HCT116 (cell line): ENCODE measurements at regions of chr7 and their contacts with region 1.

Region 1: DNA sequence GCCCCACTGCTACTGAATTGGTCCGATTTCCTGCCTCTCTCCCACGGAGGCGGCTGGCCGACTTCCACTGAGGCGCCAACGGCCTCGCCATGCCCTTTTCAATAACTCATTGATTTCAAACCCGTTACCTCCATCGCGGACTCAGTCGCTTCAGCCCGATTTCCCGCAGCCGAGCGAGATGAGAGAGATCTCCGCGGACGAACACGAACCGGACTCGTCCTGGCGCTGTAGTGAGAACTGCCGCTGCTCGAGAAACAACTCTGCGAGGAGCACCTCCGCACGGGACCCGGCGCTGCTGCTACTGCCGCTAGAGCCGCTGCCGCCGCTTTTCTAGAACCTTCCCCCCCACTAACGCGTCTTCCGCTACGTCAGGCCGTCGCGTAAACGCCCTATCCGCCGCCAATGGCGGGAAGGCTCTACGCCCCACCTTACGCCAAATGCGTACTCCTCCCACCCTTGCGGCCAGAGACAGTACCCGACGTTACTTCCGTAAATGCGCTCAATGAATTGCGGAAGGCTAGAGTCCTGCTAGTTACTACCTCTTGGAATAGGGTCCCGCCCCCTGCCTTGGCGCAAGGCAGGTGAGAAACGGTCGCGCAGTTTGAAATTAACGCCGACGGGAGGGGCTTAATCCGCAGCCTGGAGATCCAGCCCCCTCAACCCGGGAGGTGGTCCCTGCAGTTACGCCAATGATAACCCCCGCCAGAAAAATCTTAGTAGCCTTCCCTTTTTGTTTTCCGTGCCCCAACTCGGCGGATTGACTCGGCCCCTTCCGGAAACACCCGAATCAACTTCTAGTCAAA is at the start of gene HNRNPA2B1:
- DNase-seq: peak; percentile 95
- ATAC-seq: peak; percentile 78
- H3K4me3 ChIP-seq: peak within 1 kb of the TSS; percentile 68 to 93
- H3K27ac ChIP-seq: peak within 1 kb of the TSS; percentile 97
- H3K4me1 ChIP-seq: peaks cover 13 to 39% of the 10 kb centered on the region in 2 experiments
- H3K27me3 ChIP-seq: no peaks in the 10 kb centered on the region
- CTCF ChIP-seq: no peak
- POLR2A ChIP-seq: peak; percentile 99
- RAD21 ChIP-seq: no peak
- total RNA-seq, gene HNRNPA2B1: 870 TPM

Region 2: GRCh38 chr7:25968205-25968993 is 232.2 kb before region 1 on chr7:
- CTCF ChIA-PET with region 1: no interaction called
- POLR2A ChIA-PET with region 1: no interaction called
- RAD21 ChIA-PET with region 1: no interaction called
- intact Hi-C with region 1: no loop called
- DNase-seq: no peak
- ATAC-seq: no peak
- H3K4me3 ChIP-seq: no peak overlapping the region
- H3K27ac ChIP-seq: no peak overlapping the region
- H3K4me1 ChIP-seq: no peaks in the 10 kb centered on the region
- H3K27me3 ChIP-seq: peaks cover 20% of the 10 kb centered on the region
- CTCF ChIP-seq: no peak
- POLR2A ChIP-seq: no peak
- RAD21 ChIP-seq: no peak

Region 3: DNA sequence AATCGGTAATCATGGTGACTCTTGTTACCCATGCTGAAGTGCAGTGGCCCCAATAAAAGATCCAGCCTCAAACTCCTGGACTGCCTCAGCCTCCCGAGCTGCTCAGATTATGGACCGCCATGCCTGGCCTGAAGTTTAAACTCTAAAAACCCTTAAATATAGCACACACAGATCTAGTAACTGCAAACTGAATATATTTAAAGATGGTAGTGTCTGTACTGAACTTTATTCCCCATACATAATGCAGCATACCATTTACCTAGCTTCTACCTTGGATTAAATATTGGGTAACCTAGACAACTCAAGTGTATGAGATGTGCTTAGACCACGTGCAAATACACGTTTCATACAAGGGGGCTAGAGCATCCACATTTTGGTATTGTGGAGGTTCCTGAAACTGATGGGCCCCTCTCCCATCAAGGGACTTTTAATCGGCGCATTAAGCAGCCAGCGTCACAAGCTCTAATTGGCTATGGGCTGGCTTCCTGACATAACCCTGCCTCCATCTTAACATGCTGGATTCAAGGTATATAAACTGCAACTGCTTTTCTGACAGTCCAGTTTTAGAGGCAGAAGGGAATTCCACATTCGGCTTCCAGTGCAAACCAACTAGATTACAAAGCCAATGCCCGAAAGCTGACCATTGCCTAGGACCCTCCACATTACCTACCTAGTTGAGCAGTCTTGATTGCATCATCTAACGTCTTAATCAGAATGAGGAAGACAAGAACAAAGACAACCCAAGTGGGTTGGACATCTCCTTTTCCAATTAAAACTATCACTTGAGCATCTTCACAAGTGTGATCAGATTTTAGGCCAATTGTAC is 13.1 kb before region 1 on chr7:
- CTCF ChIA-PET with region 1: no interaction called
- POLR2A ChIA-PET with region 1: interaction called, 12 read pairs
- RAD21 ChIA-PET with region 1: no interaction called
- intact Hi-C with region 1: no loop called
- DNase-seq: no peak
- ATAC-seq: peak; percentile 43
- H3K4me3 ChIP-seq: no peak overlapping the region
- H3K27ac ChIP-seq: no peak overlapping the region; the same call in none of the 2 replicates
- H3K4me1 ChIP-seq: no peaks in the 10 kb centered on the region
- H3K27me3 ChIP-seq: no peaks in the 10 kb centered on the region
- CTCF ChIP-seq: no peak
- POLR2A ChIP-seq: no peak
- RAD21 ChIP-seq: no peak

Region 4: DNA sequence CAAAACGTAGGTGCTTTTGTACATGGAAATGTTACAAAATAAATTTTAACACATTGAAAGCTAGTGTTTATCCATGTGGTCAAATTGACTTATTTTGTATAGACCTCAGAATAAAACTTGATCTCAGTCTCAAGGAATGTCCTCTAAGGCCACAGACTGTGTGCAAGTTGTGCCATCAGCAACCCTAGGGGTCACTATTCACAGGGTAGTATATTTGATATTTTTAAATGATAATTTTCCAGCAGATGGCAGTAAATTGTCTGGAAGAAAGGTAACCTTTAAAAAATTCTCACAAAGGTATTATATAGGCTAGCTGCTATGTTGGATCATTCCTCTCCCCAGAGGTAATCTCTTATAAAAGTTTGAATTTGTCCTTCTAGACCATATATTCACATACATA is 78.1 kb after region 1 on chr7:
- CTCF ChIA-PET with region 1: no interaction called
- POLR2A ChIA-PET with region 1: no interaction called
- RAD21 ChIA-PET with region 1: no interaction called
- intact Hi-C with region 1: loop called (anchors 10 kb)
- DNase-seq: peak; percentile 36
- ATAC-seq: peak; percentile 90
- H3K4me3 ChIP-seq: no peak overlapping the region
- H3K27ac ChIP-seq: no peak overlapping the region
- H3K4me1 ChIP-seq: no peaks in the 10 kb centered on the region
- H3K27me3 ChIP-seq: no peaks in the 10 kb centered on the region
- CTCF ChIP-seq: peak; percentile 60 to 98 (median 64)
- POLR2A ChIP-seq: no peak
- RAD21 ChIP-seq: peak; percentile 62

Region 5: GRCh38 chr7:26813432-26813831 is 612.8 kb after region 1 on chr7:
- CTCF ChIA-PET with region 1: no interaction called
- POLR2A ChIA-PET with region 1: no interaction called
- RAD21 ChIA-PET with region 1: no interaction called
- intact Hi-C with region 1: no loop called
- DNase-seq: no peak
- ATAC-seq: no peak
- H3K4me3 ChIP-seq: no peak overlapping the region
- H3K27ac ChIP-seq: no peak overlapping the region
- H3K4me1 ChIP-seq: no peaks in the 10 kb centered on the region
- H3K27me3 ChIP-seq: no peaks in the 10 kb centered on the region
- CTCF ChIP-seq: no peak
- POLR2A ChIP-seq: no peak
- RAD21 ChIP-seq: no peak

Region 6: GRCh38 chr7:27071622-27072390 is 871.2 kb after region 1 on chr7:
- CTCF ChIA-PET with region 1: no interaction called
- POLR2A ChIA-PET with region 1: no interaction called
- RAD21 ChIA-PET with region 1: no interaction called
- intact Hi-C with region 1: no loop called
- DNase-seq: no peak
- ATAC-seq: peak; percentile 88
- H3K4me3 ChIP-seq: no peak overlapping the region
- H3K27ac ChIP-seq: no peak overlapping the region
- H3K4me1 ChIP-seq: peaks cover 14 to 17% of the 10 kb centered on the region in 2 experiments
- H3K27me3 ChIP-seq: no peaks in the 10 kb centered on the region
- CTCF ChIP-seq: no peak
- POLR2A ChIP-seq: no peak
- RAD21 ChIP-seq: no peak